ENCODE measurements at regions of chr14 and their contacts with region 1.

Region 1: GRCh38 chr14:64891839-64892375 is 12.2 kb upstream of the SPTB start:
- DNase-seq: no peak
- ATAC-seq: peak; percentile 78
- H3K4me3 Mint-ChIP-seq: no peak overlapping the region
- H3K27ac Mint-ChIP-seq: no peak overlapping the region
- H3K4me1 Mint-ChIP-seq: no peaks in the 10 kb centered on the region
- H3K27me3 Mint-ChIP-seq: peaks cover 3% of the 10 kb centered on the region; the same call in 1 of the 2 replicates
- CTCF ChIP-seq: peak; percentile 29; the same call in 1 of the 2 replicates

Region 2: DNA sequence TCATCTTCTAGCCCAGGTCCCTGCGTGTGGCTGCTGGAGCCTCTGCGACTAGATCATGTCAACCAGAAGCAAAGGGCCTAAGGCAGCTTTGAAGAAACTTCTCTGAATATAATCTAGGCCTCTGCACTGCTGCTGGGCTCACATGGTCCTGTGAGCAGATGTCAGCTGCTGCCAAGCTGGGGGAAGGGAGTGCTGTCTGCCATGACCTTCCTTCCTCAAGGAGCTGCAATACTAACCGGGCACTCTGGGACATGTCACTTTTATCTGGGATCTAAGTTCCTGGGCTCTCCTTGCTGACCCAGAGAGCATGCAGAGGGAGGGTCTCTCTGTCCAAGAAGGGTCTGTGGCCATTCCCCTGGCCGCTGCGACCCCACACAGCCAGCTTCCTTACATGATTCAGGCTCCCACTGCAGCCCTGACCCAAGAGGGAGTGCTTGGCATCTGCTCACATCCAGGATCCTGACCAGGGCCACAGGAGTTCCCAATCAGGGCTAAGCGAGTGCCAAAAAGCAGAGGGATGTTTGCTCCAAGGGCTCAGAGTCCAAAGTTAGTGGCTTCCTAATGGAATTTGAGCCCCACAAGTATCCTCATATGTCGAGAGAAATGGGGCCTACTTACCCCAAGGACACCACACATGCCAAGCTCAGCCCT is 113.7 kb before region 1 on chr14:
- CTCF ChIA-PET with region 1: interaction called, 10 read pairs
- POLR2A ChIA-PET with region 1: no interaction called
- DNase-seq: no peak
- ATAC-seq: no peak
- H3K4me3 Mint-ChIP-seq: no peak overlapping the region
- H3K27ac Mint-ChIP-seq: no peak overlapping the region
- H3K4me1 Mint-ChIP-seq: peaks cover 5% of the 10 kb centered on the region
- H3K27me3 Mint-ChIP-seq: peaks cover 1% of the 10 kb centered on the region; the same call in 1 of the 2 replicates
- CTCF ChIP-seq: no peak

Region 3: GRCh38 chr14:64800000-64800399 is 91.9 kb before region 1 on chr14:
- CTCF ChIA-PET with region 1: interaction called, 126 read pairs
- POLR2A ChIA-PET with region 1: interaction called, 6 read pairs
- DNase-seq: peak; percentile 38
- ATAC-seq: peak; percentile 49
- H3K4me3 Mint-ChIP-seq: no peak overlapping the region
- H3K27ac Mint-ChIP-seq: no peak overlapping the region
- H3K4me1 Mint-ChIP-seq: peaks cover 3% of the 10 kb centered on the region; the same call in 1 of the 2 replicates
- H3K27me3 Mint-ChIP-seq: no peaks in the 10 kb centered on the region; the same call in 1 of the 2 replicates
- CTCF ChIP-seq: 0 out of 2 replicates have a peak, but pooled peaks have one; percentile 26

Region 4: DNA sequence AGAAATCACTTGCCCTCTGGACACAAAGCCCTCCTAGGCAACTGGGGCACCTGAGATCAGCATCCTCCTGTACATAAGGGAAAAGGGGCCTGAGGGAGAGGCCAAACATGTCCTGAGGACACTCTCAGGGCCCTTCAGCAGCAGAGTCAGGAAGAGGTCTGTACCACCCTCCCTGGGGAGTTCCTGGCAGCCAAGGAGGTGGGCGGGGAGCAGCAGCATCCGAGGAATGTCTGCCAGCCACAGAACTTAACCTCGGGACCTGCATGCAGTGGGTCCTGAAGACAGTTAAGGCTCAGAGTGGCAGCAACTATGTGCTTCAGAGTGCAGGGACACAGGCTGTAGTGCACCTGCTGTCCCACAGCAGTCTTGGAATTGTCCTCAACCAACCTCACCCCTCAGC is 74.3 kb before region 1 on chr14:
- CTCF ChIA-PET with region 1: interaction called, 204 read pairs
- POLR2A ChIA-PET with region 1: no interaction called
- DNase-seq: no peak
- ATAC-seq: 0 out of 2 replicates have a peak, but pooled peaks have one; percentile 18
- H3K4me3 Mint-ChIP-seq: no peak overlapping the region
- H3K27ac Mint-ChIP-seq: no peak overlapping the region
- H3K4me1 Mint-ChIP-seq: peaks cover 15% of the 10 kb centered on the region
- H3K27me3 Mint-ChIP-seq: no peaks in the 10 kb centered on the region; the same call in 1 of the 2 replicates
- CTCF ChIP-seq: no peak

Region 5: GRCh38 chr14:64910847-64911495 is 19.1 kb after region 1 on chr14:
- CTCF ChIA-PET with region 1: interaction called, 20 read pairs
- POLR2A ChIA-PET with region 1: no interaction called
- DNase-seq: no peak
- ATAC-seq: no peak
- H3K4me3 Mint-ChIP-seq: no peak overlapping the region
- H3K27ac Mint-ChIP-seq: no peak overlapping the region
- H3K4me1 Mint-ChIP-seq: peaks cover 11% of the 10 kb centered on the region
- H3K27me3 Mint-ChIP-seq: no peaks in the 10 kb centered on the region; the same call in none of the 2 replicates
- CTCF ChIP-seq: peak; percentile 41; the same call in 1 of the 2 replicates

Measured in WTC11 (cell line).